OCI-LY7 (cell line): ENCODE measurements at regions of chr2 and their contacts with region 1.

Region 1: DNA sequence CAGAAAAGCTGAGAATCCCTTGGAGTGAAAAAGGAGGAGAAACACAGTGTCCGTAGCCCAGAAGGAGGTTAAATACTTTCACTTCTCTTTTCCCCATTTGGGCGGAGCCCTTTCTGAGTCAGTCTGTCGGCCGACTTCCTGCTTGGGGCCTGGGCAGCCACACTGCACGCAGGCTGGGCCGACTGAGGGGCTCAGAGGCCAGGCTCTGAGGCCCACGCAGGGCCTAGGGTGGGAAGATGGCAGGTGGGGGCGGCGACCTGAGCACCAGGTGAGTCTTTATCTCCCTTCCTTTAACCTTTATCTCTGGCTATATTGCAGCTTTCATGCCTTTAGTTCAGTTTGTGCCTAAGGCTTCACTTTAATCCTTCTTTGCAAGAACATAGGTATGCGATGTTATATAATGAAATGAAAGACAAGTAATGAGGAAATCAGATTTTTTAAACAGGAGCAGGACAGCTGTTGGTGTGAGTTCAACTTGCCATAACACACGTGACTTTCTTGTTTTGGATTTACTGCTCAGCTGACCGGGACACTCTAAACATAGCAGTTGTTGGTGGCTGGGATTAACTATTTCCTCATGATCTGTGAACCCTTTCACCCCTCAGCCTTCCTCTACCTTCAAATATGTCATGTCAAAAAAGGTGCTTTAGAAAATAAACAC is at the start of gene SP100:
- DNase-seq: peak; percentile 91
- H3K4me3 ChIP-seq: peak within 1 kb of the TSS; percentile 72
- H3K27ac ChIP-seq: peak within 1 kb of the TSS; percentile 91
- H3K4me1 ChIP-seq: peaks cover 44% of the 10 kb centered on the region
- CTCF ChIP-seq: no peak
- total RNA-seq, gene SP100: 44.6 and 60.5 TPM in 2 replicates

Region 2: DNA sequence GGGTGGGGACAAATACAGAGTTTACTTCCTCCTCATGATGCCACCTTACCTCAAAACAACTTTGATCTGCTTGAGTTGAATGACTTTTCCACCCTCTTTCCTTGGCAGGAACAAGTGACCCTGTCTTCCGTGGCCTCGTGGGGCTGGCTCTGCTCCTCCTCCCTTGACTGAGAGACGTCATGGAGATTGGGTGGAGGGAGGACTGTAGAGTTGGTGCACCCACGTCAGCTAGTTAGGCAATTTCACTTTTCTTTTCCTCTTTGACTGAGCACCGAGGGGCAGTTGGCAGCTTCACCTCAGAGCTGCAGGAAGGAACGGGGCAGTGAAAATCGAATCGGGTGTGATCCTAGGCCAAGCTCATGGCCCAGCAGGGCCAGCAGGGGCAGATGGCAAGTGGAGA is 190.7 kb before region 1 on chr2 and contains the start of gene SP140:
- CTCF ChIA-PET with region 1: no interaction called
- POLR2A ChIA-PET with region 1: no interaction called
- intact Hi-C with region 1: loop called (anchors 5 kb)
- DNase-seq: peak; percentile 57
- H3K4me3 ChIP-seq: peak within 1 kb of the TSS; percentile 51
- H3K27ac ChIP-seq: peak within 1 kb of the TSS; percentile 69
- H3K4me1 ChIP-seq: peaks cover 54% of the 10 kb centered on the region
- CTCF ChIP-seq: no peak
- total RNA-seq, gene SP140: 4.3 and 4.8 TPM in 2 replicates

Region 3: GRCh38 chr2:230326453-230327417 is 89.5 kb before region 1 on chr2 and contains the start of gene SP140L:
- CTCF ChIA-PET with region 1: no interaction called
- POLR2A ChIA-PET with region 1: interaction called, 6 read pairs
- intact Hi-C with region 1: loop called (anchors 5 kb)
- DNase-seq: peak; percentile 84
- H3K4me3 ChIP-seq: peak within 1 kb of the TSS; percentile 69
- H3K27ac ChIP-seq: peak within 1 kb of the TSS; percentile 75
- H3K4me1 ChIP-seq: peaks cover 29% of the 10 kb centered on the region
- CTCF ChIP-seq: no peak
- total RNA-seq, gene SP140L: 7.5 and 10.4 TPM in 2 replicates

Region 4: DNA sequence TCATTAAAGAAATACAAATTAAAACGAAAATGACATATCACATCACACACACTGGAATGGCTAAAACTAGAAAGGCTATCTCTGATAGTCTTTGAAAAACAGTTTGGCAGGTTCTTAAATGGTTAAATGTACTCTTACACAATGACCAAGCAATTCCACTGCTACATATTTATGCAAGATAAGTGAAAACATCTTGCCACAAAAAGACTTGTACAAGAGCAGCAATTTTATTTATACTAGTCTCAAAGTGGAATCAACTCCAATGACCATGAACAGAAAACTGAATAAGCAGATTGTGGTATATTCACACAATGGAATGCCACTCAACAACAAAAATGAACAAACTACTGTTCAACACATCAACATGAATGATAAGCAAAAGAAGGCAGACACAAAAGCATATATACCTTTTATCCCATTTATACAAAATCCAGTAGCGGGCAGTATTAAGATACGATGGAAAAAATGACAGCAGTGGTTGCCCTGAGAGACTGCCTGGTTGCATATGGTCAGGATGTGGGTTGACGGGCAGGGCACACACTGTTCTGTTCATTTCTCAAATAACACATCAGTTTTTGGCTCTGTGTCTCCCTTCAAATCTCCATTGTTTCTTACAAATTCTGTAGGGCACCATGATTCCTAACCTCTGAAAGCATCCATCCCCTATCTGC is 25.2 kb after region 1 on chr2:
- CTCF ChIA-PET with region 1: no interaction called
- POLR2A ChIA-PET with region 1: interaction called, 6 read pairs
- intact Hi-C with region 1: loop called (anchors 2 kb)
- DNase-seq: peak; percentile 15
- H3K4me3 ChIP-seq: no peak overlapping the region
- H3K27ac ChIP-seq: no peak overlapping the region
- H3K4me1 ChIP-seq: peaks cover 13% of the 10 kb centered on the region
- CTCF ChIP-seq: no peak